Ascending aorta (tissue), 2 donors: ENCODE measurements at regions of chr12 and their contacts with region 1.

Region 1: DNA sequence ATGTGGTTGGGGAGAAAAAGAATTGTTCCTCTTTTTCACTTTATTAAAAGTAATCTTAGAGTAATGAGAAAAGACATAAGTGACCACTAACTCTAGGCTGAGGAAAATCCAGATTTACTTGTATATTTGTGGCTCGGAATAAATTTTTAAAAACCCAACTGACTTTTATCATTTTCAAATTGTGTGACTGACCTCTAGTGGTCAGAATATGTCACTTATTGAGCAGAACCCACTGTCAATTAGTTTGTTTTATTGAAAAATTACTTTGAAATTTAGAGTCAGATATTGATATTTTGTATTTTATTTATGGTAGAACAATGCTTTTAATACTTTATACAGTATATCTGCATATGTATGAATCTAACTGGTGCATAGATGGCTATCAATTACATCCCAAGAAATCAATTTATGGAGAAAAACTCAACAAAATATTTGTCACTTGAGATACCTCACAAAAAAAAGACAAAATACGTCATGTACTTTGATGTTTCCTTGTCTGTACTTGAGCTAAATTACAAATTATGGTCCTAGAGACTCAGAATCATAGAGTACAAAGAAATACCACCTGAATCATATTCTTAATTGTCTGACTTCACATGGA is 229.4 kb downstream of the CNTN1 start:
- DNase-seq: no peak
- H3K4me3 ChIP-seq: no peak overlapping the region
- H3K27ac ChIP-seq: no peak overlapping the region
- H3K4me1 ChIP-seq: no peaks in the 10 kb centered on the region
- H3K27me3 ChIP-seq: no peaks in the 10 kb centered on the region
- CTCF ChIP-seq: peak; percentile 37 to 68 (median 45)

Region 2: GRCh38 chr12:40622246-40622838 is 299.3 kb before region 1 on chr12:
- intact Hi-C with region 1: loop called (anchors 1 kb)
- DNase-seq: peak in 1 of 2 donors; percentile 71
- H3K4me3 ChIP-seq: no peak overlapping the region
- H3K27ac ChIP-seq: no peak overlapping the region
- H3K4me1 ChIP-seq: no peaks in the 10 kb centered on the region
- H3K27me3 ChIP-seq: no peaks in the 10 kb centered on the region
- CTCF ChIP-seq: peak; percentile 25 to 74 (median 44)

Region 3: DNA sequence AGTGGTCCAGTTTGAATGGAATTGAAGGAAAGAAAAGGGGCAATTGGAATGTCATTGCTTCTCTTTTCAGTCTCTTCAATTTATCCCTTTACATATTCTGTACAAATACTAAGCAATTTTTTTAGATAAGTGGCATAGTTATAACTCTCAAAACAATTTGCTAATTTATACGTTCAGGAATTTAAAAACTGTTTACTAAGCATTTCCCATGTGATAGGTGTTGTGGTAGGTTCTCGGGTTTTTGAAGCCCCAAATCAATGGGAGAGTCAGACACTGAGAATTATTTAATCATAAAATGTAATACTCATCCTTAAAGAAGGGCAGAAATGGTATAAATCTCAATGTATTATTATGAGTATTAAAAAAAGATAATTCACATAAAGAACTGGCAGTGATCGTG is 32.3 kb before region 1 on chr12:
- intact Hi-C with region 1: no loop called
- DNase-seq: no peak
- H3K4me3 ChIP-seq: no peak overlapping the region
- H3K27ac ChIP-seq: no peak overlapping the region
- H3K4me1 ChIP-seq: no peaks in the 10 kb centered on the region
- H3K27me3 ChIP-seq: no peaks in the 10 kb centered on the region
- CTCF ChIP-seq: no peak

Region 4: GRCh38 chr12:41576925-41577324 is 655.3 kb after region 1 on chr12:
- intact Hi-C with region 1: no loop called
- DNase-seq: no peak
- H3K4me3 ChIP-seq: no peak overlapping the region
- H3K27ac ChIP-seq: no peak overlapping the region
- H3K4me1 ChIP-seq: no peaks in the 10 kb centered on the region
- H3K27me3 ChIP-seq: no peaks in the 10 kb centered on the region
- CTCF ChIP-seq: no peak